ENCODE measurements at regions of chr9 and their contacts with region 1.

Region 1: GRCh38 chr9:68974431-68974830 is 39.5 kb downstream of the PRKACG start:
- DNase-seq: peak; percentile 76
- H3K4me3 Mint-ChIP-seq: peak overlapping the region; percentile 65
- H3K27ac Mint-ChIP-seq: peak overlapping the region; percentile 84
- H3K4me1 Mint-ChIP-seq: peaks cover 57% of the 10 kb centered on the region
- H3K27me3 Mint-ChIP-seq: no peaks in the 10 kb centered on the region

Region 2: DNA sequence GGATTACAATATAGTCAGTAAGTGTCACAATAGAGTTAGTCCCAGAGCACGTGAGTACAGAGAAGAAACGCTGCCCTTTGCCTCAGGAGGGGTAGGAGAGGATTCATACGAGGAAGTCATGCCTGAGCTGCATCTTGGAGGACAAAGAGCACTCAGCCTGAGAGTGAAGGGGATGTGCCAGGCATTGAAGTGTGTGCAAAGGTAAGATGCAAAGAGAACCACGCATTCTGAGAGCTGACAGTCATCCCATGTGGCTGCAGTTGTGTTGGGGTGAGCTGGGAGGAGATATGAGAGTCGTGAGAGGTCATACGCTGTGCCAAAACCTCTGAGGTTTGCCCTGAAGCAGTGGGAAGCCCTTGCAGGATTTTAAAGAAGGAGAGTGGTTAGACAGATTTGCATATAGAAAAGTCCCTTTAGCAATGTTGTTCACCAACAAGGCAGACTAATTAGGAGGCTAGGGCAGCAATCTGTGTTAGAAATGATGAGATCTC is 171.9 kb before region 1 on chr9:
- intact Hi-C with region 1: loop called (anchors 2 kb)
- DNase-seq: peak; percentile 74
- H3K4me3 Mint-ChIP-seq: no peak overlapping the region
- H3K27ac Mint-ChIP-seq: no peak overlapping the region
- H3K4me1 Mint-ChIP-seq: peaks cover 11% of the 10 kb centered on the region
- H3K27me3 Mint-ChIP-seq: no peaks in the 10 kb centered on the region

Region 3: GRCh38 chr9:68895741-68896478 is 78.5 kb before region 1 on chr9:
- intact Hi-C with region 1: loop called (anchors 2 kb)
- DNase-seq: peak; percentile 75
- H3K4me3 Mint-ChIP-seq: peak overlapping the region; percentile 73
- H3K27ac Mint-ChIP-seq: peak overlapping the region; percentile 82
- H3K4me1 Mint-ChIP-seq: peaks cover 46% of the 10 kb centered on the region
- H3K27me3 Mint-ChIP-seq: no peaks in the 10 kb centered on the region

Region 4: DNA sequence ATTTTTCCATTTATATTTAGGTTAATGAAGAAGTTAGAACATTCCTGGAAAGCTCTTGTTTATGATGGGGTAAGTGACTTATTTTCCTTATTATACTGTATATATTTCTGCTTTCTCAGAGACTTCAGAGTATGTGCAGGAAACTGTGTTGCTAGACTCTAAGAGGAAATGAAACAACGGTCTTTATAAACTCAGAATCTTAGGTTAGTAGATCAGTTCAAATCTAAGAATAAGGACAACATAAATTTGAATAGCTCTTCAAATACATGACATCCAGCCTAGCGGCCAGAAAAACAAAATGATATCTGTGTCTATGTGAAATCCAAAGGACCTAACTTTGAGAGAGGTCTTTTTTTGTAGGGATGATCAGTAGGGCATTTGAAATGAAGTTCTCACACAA is 54.8 kb before region 1 on chr9:
- intact Hi-C with region 1: loop called (anchors 5 kb)
- DNase-seq: no peak
- H3K4me3 Mint-ChIP-seq: no peak overlapping the region
- H3K27ac Mint-ChIP-seq: no peak overlapping the region
- H3K4me1 Mint-ChIP-seq: peaks cover 21% of the 10 kb centered on the region
- H3K27me3 Mint-ChIP-seq: no peaks in the 10 kb centered on the region

Region 5: DNA sequence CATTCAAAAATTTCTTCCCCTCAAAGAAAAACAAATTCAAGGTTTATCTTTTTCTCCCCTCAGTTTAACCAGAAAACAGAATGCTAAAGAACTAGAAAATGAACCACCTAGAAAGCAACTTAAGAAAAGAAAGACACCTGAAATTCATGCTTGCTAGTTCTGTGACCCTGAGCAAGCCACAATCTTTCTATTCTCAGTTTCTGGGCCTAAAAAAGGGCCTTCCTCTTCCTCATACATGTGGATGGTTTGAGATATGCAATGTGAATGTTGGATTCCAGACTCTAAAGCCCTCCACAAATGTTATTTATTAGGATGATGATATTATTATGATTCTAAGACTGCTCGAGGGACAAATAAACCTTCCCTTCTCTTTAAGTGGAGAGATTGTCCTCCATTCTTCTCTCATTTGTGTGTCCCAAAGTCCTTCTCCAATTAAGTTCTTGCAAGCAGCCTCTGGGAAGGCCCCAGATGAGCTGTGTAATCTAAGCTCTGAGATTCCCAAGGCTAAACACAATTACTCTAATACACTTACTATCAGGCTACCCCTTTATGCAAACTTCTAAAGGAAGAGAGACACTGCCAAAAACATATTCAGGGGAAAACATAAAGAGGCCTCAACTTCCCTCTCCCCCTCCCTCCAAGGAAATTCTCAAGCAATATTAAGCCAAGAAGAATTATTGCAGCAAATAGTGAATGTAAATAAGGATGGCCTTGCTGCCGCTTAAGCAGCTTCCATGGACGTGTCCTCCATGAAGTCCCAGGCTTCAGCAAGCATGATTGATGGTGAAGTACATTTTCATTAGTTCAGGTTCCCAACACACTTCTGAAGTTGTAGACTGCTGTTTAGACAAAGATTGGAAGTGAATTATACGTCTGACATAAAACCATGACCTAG is 40.8 kb before region 1 on chr9:
- intact Hi-C with region 1: loop called (anchors 5 kb)
- DNase-seq: no peak
- H3K4me3 Mint-ChIP-seq: no peak overlapping the region
- H3K27ac Mint-ChIP-seq: no peak overlapping the region
- H3K4me1 Mint-ChIP-seq: peaks cover 21% of the 10 kb centered on the region
- H3K27me3 Mint-ChIP-seq: peaks cover 30% of the 10 kb centered on the region

Region 6: GRCh38 chr9:68949271-68950000 is 25.0 kb before region 1 on chr9:
- intact Hi-C with region 1: loop called (anchors 1 kb)
- DNase-seq: peak; percentile 79
- H3K4me3 Mint-ChIP-seq: peak overlapping the region; percentile 28
- H3K27ac Mint-ChIP-seq: peak overlapping the region; percentile 81
- H3K4me1 Mint-ChIP-seq: peaks cover 59% of the 10 kb centered on the region
- H3K27me3 Mint-ChIP-seq: no peaks in the 10 kb centered on the region

Region 7: GRCh38 chr9:69012696-69013381 is 38.4 kb after region 1 on chr9:
- intact Hi-C with region 1: no loop called
- DNase-seq: peak; percentile 64
- H3K4me3 Mint-ChIP-seq: peak overlapping the region; percentile 40
- H3K27ac Mint-ChIP-seq: no peak overlapping the region
- H3K4me1 Mint-ChIP-seq: peaks cover 14% of the 10 kb centered on the region
- H3K27me3 Mint-ChIP-seq: peaks cover 22% of the 10 kb centered on the region

Region 8: GRCh38 chr9:69672596-69673310 is 698.3 kb after region 1 on chr9:
- intact Hi-C with region 1: no loop called
- DNase-seq: peak; percentile 92
- H3K4me3 Mint-ChIP-seq: peak overlapping the region; percentile 86
- H3K27ac Mint-ChIP-seq: peak overlapping the region; percentile 43
- H3K4me1 Mint-ChIP-seq: peaks cover 15% of the 10 kb centered on the region
- H3K27me3 Mint-ChIP-seq: peaks cover 43% of the 10 kb centered on the region